ENCODE measurements at regions of chr13 and their contacts with region 1.

Region 1: DNA sequence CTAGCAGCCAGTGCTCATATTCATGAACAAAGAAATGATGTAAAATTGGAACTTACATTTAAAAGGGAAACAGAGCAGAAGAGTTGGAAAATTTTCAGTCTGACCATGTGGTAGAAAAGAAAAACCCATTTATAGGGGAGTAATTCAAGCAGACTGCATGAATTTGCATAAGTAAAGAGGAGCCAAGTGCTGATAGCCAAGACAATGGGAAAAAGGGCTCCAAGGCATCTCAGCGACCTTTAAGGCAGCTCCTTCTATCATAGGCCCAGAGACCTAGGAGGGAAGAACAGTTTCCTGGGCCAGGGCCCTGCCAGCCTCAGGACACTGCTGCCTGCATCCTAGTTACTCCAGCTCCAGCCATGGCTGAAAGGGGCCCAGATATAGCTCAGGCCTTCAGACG is 7.5 kb downstream of the DNAJC3 start:
- DNase-seq: no peak
- ATAC-seq: peak in 1 of 4 donors; percentile 30
- H3K4me3 ChIP-seq: no peak overlapping the region
- H3K27ac ChIP-seq: no peak overlapping the region
- H3K4me1 ChIP-seq: peaks cover 67% of the 10 kb centered on the region
- H3K27me3 ChIP-seq: no peaks in the 10 kb centered on the region
- CTCF ChIP-seq: no peak

Region 2: DNA sequence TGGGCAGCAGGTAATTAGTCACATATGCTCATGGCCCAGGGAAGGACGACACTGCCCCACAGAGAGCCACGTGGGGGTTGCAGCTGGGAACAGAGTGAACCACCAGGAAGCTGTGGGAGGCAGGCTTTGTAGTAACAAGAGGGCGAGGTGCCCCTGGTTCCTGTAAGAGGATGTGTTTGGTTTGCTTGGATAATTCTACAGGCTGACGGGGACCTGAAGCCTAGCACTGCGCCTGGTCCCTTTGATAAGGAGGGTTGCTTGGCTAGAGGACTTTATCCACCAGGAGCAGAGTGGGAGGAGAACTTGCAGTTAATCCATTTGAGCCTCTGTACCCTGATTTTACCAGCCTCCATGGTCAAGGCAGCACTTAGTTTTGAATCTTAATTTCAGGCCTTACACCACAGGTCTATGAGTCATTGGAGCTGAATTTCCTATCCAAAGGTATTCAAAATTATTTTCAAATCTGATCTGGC is 199.3 kb before region 1 on chr13:
- intact Hi-C with region 1: no loop called
- DNase-seq: no peak
- ATAC-seq: no peak
- H3K4me3 ChIP-seq: no peak overlapping the region
- H3K27ac ChIP-seq: no peak overlapping the region
- H3K4me1 ChIP-seq: no peaks in the 10 kb centered on the region
- H3K27me3 ChIP-seq: no peaks in the 10 kb centered on the region
- CTCF ChIP-seq: no peak

Region 3: DNA sequence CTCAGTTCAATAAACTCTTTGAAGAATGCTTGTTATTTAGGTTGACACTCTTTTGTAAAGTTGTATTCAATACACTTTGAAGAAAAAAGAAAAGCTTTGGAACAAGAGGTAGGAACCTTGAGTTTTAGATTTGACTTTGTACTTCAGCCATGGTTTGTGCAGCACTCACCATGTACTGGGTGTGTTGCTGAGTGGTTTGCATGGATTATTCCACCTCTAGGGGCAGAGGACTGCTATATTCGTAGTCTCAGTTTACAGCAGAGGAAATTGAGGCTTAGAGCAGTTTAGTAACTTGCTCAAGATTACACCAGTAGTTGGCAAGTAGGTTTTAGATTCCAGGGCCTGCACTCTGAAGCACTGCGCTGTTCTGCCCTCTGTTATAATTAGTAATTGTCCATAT is 61.3 kb after region 1 on chr13:
- intact Hi-C with region 1: loop called (anchors 5 kb)
- DNase-seq: no peak
- ATAC-seq: peak; percentile 60 to 81 (median 74)
- H3K4me3 ChIP-seq: no peak overlapping the region
- H3K27ac ChIP-seq: no peak overlapping the region
- H3K4me1 ChIP-seq: peaks cover 7% of the 10 kb centered on the region
- H3K27me3 ChIP-seq: no peaks in the 10 kb centered on the region
- CTCF ChIP-seq: no peak

Region 4: GRCh38 chr13:95813139-95813538 is 128.7 kb after region 1 on chr13:
- intact Hi-C with region 1: no loop called
- DNase-seq: no peak
- ATAC-seq: no peak
- H3K4me3 ChIP-seq: no peak overlapping the region
- H3K27ac ChIP-seq: no peak overlapping the region
- H3K4me1 ChIP-seq: no peaks in the 10 kb centered on the region
- H3K27me3 ChIP-seq: no peaks in the 10 kb centered on the region
- CTCF ChIP-seq: no peak

Measured in psoas muscle (tissue), 8 donors.